Natural killer cell (primary cell): ENCODE measurements at regions of chr12 and their contacts with region 1.

Region 1: GRCh38 chr12:111451649-111452129 is 46.0 kb downstream of the SH2B3 start:
- DNase-seq: peak in 1 of 2 donors; percentile 81
- ATAC-seq: peak; percentile 63 to 78 (median 72)
- H3K4me3 ChIP-seq: no peak overlapping the region
- H3K4me3 Mint-ChIP-seq: peak overlapping the region; percentile 25
- H3K27ac ChIP-seq: no peak overlapping the region
- H3K27ac Mint-ChIP-seq: peak overlapping the region; percentile 44 to 70
- H3K4me1 ChIP-seq: peaks cover 28% of the 10 kb centered on the region
- H3K4me1 Mint-ChIP-seq: peaks cover 56 to 58% of the 10 kb centered on the region in 2 donors
- H3K27me3 ChIP-seq: no peaks in the 10 kb centered on the region
- H3K27me3 Mint-ChIP-seq: no peaks in the 10 kb centered on the region
- CTCF ChIP-seq: peak; percentile 88

Region 2: GRCh38 chr12:111298582-111299436 is 152.9 kb before region 1 on chr12:
- intact Hi-C with region 1: no loop called
- DNase-seq: peak in 1 of 2 donors; percentile 66
- ATAC-seq: peak in 1 of 3 donors; percentile 57
- H3K4me3 ChIP-seq: no peak overlapping the region
- H3K4me3 Mint-ChIP-seq: no peak overlapping the region
- H3K27ac ChIP-seq: no peak overlapping the region
- H3K27ac Mint-ChIP-seq: no peak overlapping the region
- H3K4me1 ChIP-seq: no peaks in the 10 kb centered on the region
- H3K4me1 Mint-ChIP-seq: no peaks in the 10 kb centered on the region
- H3K27me3 ChIP-seq: no peaks in the 10 kb centered on the region
- H3K27me3 Mint-ChIP-seq: no peaks in the 10 kb centered on the region
- CTCF ChIP-seq: peak; percentile 52

Region 3: GRCh38 chr12:111330800-111331752 is 120.6 kb before region 1 on chr12:
- intact Hi-C with region 1: no loop called
- DNase-seq: peak in 1 of 2 donors; percentile 37
- ATAC-seq: no peak
- H3K4me3 ChIP-seq: no peak overlapping the region
- H3K4me3 Mint-ChIP-seq: no peak overlapping the region
- H3K27ac ChIP-seq: no peak overlapping the region
- H3K27ac Mint-ChIP-seq: no peak overlapping the region
- H3K4me1 ChIP-seq: peaks cover 5% of the 10 kb centered on the region
- H3K4me1 Mint-ChIP-seq: peaks cover 11 to 12% of the 10 kb centered on the region in 2 donors
- H3K27me3 ChIP-seq: no peaks in the 10 kb centered on the region
- H3K27me3 Mint-ChIP-seq: peaks cover 8 to 15% of the 10 kb centered on the region in 2 donors
- CTCF ChIP-seq: no peak

Region 4: DNA sequence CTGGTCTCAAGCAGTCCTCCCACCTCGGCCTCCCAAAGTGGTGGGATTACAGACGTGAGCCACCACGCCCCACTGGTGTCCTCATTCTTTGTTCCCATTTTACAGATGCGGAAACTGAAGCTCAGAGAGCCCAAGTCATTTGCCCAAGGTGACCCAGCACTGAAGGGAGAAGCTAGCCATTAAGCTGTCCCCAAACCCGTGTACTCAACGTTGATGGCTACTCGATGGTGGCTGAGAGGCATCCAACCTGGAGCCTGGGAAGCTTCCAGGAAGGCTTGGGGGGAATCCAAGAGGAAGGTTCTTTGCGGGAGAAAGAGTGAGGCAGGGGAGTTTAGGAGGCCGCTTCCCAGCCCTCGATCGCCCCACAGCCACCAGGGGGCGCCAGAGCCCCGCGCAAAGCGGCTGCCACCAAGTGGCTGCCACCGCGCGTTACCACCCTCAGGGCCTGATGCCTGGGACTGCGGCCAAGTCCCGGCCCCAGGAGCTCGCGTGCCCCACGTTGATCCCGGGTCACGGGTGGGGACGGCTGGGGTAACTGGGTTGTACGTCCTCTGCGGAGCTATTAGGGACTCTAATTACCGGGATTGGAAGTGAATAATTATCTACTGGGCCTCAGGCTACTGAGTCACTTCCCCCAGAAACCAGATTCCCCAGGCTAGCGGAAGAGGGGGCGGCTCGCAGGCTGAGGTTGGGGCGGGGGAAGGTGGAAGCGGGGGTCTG is 54.8 kb before region 1 on chr12:
- intact Hi-C with region 1: loop called (anchors 1 kb)
- DNase-seq: peak; percentile 91 to 93
- ATAC-seq: peak; percentile 92 to 97 (median 94)
- H3K4me3 ChIP-seq: no peak overlapping the region
- H3K4me3 Mint-ChIP-seq: peak overlapping the region; percentile 60
- H3K27ac ChIP-seq: no peak overlapping the region
- H3K27ac Mint-ChIP-seq: peak overlapping the region in 1 of 2 donors; percentile 87
- H3K4me1 ChIP-seq: peaks cover 16% of the 10 kb centered on the region
- H3K4me1 Mint-ChIP-seq: peaks cover 0 to 20% of the 10 kb centered on the region in 2 donors
- H3K27me3 ChIP-seq: no peaks in the 10 kb centered on the region
- H3K27me3 Mint-ChIP-seq: peaks cover 6 to 12% of the 10 kb centered on the region in 2 donors
- CTCF ChIP-seq: peak; percentile 99

Region 5: DNA sequence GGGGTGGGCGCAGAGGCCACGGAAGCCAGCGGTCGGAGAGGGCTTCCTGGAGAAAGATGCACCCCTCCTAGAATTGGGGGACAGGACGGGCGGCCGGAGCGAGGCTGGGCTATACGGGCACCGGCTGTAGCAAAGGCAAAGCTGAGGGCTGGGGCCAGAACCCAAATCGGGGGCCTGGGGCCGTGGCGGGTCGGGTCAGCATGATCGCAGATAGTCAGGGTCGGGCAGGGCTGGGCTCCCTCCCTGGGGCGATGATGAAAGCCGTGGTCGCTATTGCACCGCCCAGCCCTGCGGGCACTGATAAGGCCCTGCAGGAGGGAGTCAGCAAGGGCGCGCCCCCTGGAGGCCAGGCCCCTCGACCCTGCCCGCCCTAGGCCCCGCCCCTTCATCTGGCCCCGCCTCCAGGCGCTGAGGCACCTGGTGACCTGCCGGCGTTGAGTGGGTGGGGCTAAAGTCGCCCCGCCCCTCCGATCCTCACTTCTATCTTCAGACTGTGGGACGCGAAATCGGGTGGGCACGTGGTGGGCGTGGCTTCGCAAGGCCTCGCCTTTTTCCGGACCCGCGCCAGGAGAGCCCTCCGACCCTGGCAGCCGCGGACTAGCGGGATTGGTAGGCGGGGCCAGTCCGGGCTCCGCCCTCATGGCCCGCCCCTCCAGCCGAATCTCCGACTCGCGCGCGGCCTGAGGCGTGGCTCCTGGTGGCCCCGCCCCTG is 46.4 kb before region 1 on chr12:
- intact Hi-C with region 1: loop called (anchors 1 kb)
- DNase-seq: peak; percentile 98
- ATAC-seq: peak; percentile 75 to 92 (median 77)
- H3K4me3 ChIP-seq: peak overlapping the region; percentile 37
- H3K4me3 Mint-ChIP-seq: peak overlapping the region; percentile 95
- H3K27ac ChIP-seq: peak overlapping the region; percentile 62
- H3K27ac Mint-ChIP-seq: peak overlapping the region; percentile 91 to 96
- H3K4me1 ChIP-seq: peaks cover 67% of the 10 kb centered on the region
- H3K4me1 Mint-ChIP-seq: peaks cover 45 to 69% of the 10 kb centered on the region in 2 donors
- H3K27me3 ChIP-seq: no peaks in the 10 kb centered on the region
- H3K27me3 Mint-ChIP-seq: peaks cover 1 to 2% of the 10 kb centered on the region in 2 donors
- CTCF ChIP-seq: peak; percentile 62

Region 6: DNA sequence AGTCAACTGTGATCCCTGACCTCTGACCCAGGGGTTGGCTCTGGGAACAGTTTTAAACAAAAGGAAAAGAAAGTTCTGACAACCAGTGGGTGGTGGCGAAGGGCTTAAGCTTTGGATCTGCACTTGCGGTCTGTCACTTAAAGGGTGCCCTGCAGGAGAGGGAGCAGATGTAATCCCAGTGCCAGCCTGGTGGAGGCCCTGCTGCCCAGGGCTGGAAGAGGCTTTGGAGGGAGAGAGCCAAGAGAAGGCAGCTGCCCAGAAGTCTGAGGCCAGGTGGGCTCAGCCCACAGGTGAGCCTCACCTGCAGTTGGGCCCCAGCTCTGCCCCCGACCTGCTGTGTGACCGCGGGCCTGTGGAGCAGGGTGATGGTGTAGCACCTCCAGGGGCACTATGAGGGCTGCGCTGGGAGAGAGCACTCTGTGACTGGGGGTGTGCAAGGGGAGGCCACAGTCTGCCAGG is 26.9 kb before region 1 on chr12:
- intact Hi-C with region 1: loop called (anchors 1 kb)
- DNase-seq: peak in 1 of 2 donors; percentile 53
- ATAC-seq: peak; percentile 27 to 35 (median 29)
- H3K4me3 ChIP-seq: no peak overlapping the region
- H3K4me3 Mint-ChIP-seq: peak overlapping the region; percentile 64
- H3K27ac ChIP-seq: peak overlapping the region; percentile 80
- H3K27ac Mint-ChIP-seq: peak overlapping the region; percentile 96 to 100
- H3K4me1 ChIP-seq: peaks cover 60% of the 10 kb centered on the region
- H3K4me1 Mint-ChIP-seq: peaks cover 42 to 49% of the 10 kb centered on the region in 2 donors
- H3K27me3 ChIP-seq: no peaks in the 10 kb centered on the region
- H3K27me3 Mint-ChIP-seq: no peaks in the 10 kb centered on the region
- CTCF ChIP-seq: peak; percentile 16

Region 7: GRCh38 chr12:111529424-111530368 is 78.0 kb after region 1 on chr12:
- intact Hi-C with region 1: loop called (anchors 5 kb)
- DNase-seq: peak; percentile 58 to 84
- ATAC-seq: peak; percentile 86 to 99 (median 99)
- H3K4me3 ChIP-seq: no peak overlapping the region
- H3K4me3 Mint-ChIP-seq: no peak overlapping the region
- H3K27ac ChIP-seq: no peak overlapping the region
- H3K27ac Mint-ChIP-seq: peak overlapping the region in 1 of 2 donors; percentile 16
- H3K4me1 ChIP-seq: no peaks in the 10 kb centered on the region
- H3K4me1 Mint-ChIP-seq: peaks cover 6% of the 10 kb centered on the region in 2 donors
- H3K27me3 ChIP-seq: no peaks in the 10 kb centered on the region
- H3K27me3 Mint-ChIP-seq: no peaks in the 10 kb centered on the region
- CTCF ChIP-seq: peak; percentile 81

Region 8: GRCh38 chr12:111578274-111578970 is 126.7 kb after region 1 on chr12:
- intact Hi-C with region 1: no loop called
- DNase-seq: no peak
- ATAC-seq: peak in 2 of 3 donors; percentile 39 to 50
- H3K4me3 ChIP-seq: no peak overlapping the region
- H3K4me3 Mint-ChIP-seq: no peak overlapping the region
- H3K27ac ChIP-seq: no peak overlapping the region
- H3K27ac Mint-ChIP-seq: peak overlapping the region; percentile 67 to 74
- H3K4me1 ChIP-seq: peaks cover 3% of the 10 kb centered on the region
- H3K4me1 Mint-ChIP-seq: peaks cover 17 to 29% of the 10 kb centered on the region in 2 donors
- H3K27me3 ChIP-seq: no peaks in the 10 kb centered on the region
- H3K27me3 Mint-ChIP-seq: no peaks in the 10 kb centered on the region
- CTCF ChIP-seq: no peak